ENCODE measurements at regions of chr2 and their contacts with region 1.

Region 1: GRCh38 chr2:16394072-16394985 is 271.3 kb downstream of the CYRIA start:
- DNase-seq: no peak
- H3K4me3 ChIP-seq: no peak overlapping the region
- H3K27ac ChIP-seq: no peak overlapping the region
- H3K4me1 ChIP-seq: no peaks in the 10 kb centered on the region
- H3K27me3 ChIP-seq: no peaks in the 10 kb centered on the region
- CTCF ChIP-seq: no peak

Region 2: DNA sequence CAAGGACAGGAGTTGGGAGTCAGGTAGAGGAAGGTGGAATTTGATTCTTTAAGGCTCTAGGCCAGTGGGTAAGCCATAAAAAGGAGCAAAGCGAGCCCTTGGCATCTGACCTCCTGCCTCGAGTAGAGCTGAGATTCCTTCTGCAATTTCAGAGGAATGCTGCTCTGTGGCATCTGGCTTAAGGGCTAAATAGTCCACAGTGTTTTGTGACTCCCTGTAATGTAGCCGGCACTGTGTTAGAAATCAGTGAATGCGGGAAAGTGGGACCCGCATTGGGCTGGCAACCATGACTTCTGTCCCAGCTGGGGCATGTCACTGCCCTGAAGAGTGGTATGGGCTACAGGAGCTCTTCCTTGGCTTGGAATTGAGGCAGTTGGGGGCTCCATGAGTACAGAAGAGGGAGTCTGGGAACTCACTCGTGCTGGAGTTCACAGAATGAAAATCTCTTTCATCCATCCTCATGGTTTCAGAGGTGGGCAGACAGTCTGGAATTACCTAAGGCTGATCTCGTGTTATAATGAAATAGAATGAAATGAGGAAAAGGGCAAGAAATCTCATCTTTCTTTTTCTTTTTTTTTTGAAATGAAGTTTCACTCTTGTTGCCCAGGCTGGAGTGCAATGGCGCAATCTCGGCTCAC is 466.6 kb before region 1 on chr2:
- intact Hi-C with region 1: no loop called
- DNase-seq: no peak
- H3K4me3 ChIP-seq: no peak overlapping the region
- H3K27ac ChIP-seq: no peak overlapping the region
- H3K4me1 ChIP-seq: no peaks in the 10 kb centered on the region
- H3K27me3 ChIP-seq: no peaks in the 10 kb centered on the region
- CTCF ChIP-seq: no peak

Region 3: DNA sequence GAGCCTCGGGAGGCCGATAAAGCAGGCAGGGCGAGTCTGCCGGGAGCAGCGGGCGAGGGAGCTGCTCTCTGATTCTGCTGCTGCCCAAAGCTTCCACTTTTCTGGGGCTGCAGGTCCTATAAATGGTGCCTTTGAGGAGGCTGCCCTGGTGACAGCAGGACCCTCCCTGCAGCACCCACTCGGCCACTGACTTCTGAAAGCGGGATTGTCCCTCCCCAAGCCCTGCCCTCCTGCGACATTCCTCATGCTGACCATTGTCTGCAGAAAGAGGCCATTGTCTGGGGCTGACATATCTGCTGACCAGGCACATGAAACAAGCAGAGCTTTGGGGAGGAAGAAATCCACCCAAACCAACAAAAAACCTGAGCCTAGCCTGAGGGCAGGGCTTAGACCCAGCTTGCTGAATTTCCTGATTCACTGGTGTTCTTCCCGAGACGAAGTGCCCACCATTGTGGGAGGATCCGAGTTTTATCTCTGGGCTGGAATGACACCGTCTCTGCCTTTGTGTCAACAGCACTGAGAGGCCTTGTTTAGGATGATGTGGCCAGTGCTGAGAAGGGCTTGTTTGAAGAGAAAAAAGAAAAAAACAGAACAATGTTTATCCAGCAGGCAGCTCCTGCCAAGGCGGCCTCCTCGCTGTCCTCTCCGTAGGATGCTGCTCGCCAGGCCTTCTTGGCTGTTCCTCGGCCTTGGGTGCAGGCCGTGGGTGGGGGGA is 324.2 kb before region 1 on chr2:
- intact Hi-C with region 1: loop called (anchors 5 kb)
- DNase-seq: no peak
- H3K4me3 ChIP-seq: no peak overlapping the region
- H3K27ac ChIP-seq: no peak overlapping the region
- H3K4me1 ChIP-seq: no peaks in the 10 kb centered on the region
- H3K27me3 ChIP-seq: no peaks in the 10 kb centered on the region
- CTCF ChIP-seq: no peak